Ascending aorta (tissue), 2 donors: ENCODE measurements at regions of chr12 and their contacts with region 1.

Region 1: GRCh38 chr12:49232940-49233841 is 31.7 kb upstream of the TUBA1C start:
- DNase-seq: peak in 1 of 2 donors; percentile 76
- H3K4me3 ChIP-seq: peak overlapping the region; percentile 0 to 41
- H3K27ac ChIP-seq: peak overlapping the region; percentile 79 to 80
- H3K4me1 ChIP-seq: peaks cover 3 to 26% of the 10 kb centered on the region in 2 donors
- H3K27me3 ChIP-seq: no peaks in the 10 kb centered on the region
- CTCF ChIP-seq: peak in 1 of 3 experiments; percentile 18

Region 2: GRCh38 chr12:49060237-49061156 is 172.7 kb before region 1 on chr12 and contains the start of gene KMT2D:
- intact Hi-C with region 1: loop called (anchors 2 kb)
- DNase-seq: peak; percentile 30 to 94
- H3K4me3 ChIP-seq: peak within 1 kb of the TSS; percentile 96 to 97
- H3K27ac ChIP-seq: peak within 1 kb of the TSS; percentile 94 to 98
- H3K4me1 ChIP-seq: peaks cover 8 to 25% of the 10 kb centered on the region in 2 donors
- H3K27me3 ChIP-seq: no peaks in the 10 kb centered on the region
- CTCF ChIP-seq: peak; percentile 25 to 83 (median 25)
- total RNA-seq, gene KMT2D: 106 TPM

Region 3: DNA sequence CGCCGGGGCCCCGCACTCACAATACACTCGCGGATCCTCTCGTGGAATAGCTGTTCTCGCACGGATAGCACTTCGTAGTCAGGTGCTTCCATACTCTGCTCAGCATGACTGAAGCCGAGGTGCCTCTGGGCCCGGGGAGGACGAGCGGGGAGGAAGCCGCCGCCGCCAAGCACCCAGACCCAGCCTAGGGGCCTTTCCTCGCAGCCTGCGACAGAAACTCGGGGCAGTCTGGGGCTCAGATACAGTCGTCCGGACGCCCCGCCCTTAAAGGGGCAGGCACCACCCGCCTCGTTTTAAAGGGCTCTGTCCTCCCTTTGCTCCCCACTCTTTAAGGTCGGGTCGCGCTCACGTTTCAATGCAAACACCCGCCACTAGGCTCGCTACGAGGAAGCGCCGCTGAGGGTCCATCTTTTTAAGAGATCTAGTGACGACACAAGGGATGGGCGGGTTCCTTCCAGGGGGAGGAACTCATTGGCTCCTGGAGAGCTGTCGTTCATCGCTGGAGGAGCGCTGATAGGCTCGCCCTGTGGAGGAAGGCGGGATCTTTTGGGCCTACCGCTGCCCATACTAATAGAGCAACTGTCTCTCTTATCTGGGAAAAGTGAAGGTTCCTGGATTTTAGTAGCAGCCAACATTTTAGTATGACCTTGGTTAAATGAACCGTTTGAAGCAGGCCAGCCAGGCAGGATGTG is 122.6 kb before region 1 on chr12 and contains the start of gene LMBR1L:
- intact Hi-C with region 1: loop called (anchors 1 kb)
- DNase-seq: peak; percentile 90 to 100
- H3K4me3 ChIP-seq: peak within 1 kb of the TSS; percentile 69 to 73
- H3K27ac ChIP-seq: peak within 1 kb of the TSS; percentile 93 to 95
- H3K4me1 ChIP-seq: peaks cover 19 to 32% of the 10 kb centered on the region in 2 donors
- H3K27me3 ChIP-seq: no peaks in the 10 kb centered on the region
- CTCF ChIP-seq: peak; percentile 32 to 64 (median 50)
- total RNA-seq, gene LMBR1L: 74.2 TPM

Region 4: DNA sequence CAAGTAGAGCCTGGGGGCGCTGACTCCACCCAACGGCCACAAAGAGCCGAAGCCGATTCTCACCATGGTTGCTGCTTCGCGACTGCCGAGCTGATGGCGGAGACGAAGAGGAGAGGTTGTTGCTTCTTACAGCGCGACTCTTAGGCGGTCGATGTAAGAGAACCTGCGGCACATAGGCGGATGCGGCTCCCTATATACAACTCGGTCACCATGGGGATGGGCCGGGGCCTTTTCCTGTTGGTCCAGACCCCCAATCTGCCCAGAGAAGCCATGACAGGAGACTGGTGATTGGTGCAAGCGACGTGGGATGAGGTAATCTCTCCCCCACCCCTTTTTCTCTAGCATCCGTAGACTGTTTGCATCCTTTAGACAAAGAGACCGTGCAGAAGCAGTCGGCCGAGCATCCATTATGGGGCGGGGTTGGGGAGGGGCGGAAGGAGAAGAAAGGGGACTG is 44.2 kb before region 1 on chr12 and contains the start of gene TUBA1A:
- intact Hi-C with region 1: loop called (anchors 1 kb)
- DNase-seq: peak; percentile 95 to 98
- H3K4me3 ChIP-seq: peak within 1 kb of the TSS; percentile 91 to 97
- H3K27ac ChIP-seq: peak within 1 kb of the TSS; percentile 99 to 100
- H3K4me1 ChIP-seq: peaks cover 7 to 10% of the 10 kb centered on the region in 2 donors
- H3K27me3 ChIP-seq: no peaks in the 10 kb centered on the region
- CTCF ChIP-seq: no peak
- total RNA-seq, gene TUBA1A: 214 TPM

Region 5: DNA sequence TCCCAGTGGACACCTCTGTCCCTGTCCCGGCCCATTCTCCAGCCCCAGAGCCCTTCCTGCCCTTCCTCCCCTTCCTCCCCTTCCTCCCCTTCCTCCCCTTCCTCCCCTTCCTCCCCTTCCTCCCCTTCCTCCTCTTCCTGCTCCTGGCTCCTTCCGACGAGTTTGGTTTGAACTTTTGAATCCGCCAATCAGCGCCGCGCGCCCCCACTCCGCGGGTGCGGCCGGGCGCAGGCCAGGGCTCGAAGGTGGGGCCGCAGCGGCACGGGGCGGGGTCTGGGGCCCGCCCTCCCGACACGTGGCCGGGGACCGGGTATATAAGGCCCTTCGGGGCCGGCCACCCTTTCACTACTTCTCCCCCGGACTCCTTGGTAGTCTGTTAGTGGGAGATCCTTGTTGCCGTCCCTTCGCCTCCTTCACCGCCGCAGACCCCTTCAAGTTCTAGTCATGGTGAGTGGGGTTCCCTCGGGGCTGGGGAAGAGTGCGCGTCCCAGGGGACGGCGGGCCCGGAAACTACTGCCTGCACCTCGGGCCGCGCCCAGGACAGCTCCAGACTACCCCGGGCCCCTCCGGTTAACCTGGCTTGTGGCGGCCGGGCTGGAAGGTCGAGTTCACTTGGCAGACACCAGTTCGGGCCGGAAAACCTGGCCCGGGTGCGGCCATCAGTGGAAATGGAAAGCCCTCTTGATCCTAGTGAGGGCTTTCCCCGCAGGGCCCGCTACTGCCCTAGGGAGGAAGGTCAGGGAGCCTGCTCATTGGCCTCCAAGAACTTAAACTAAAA is 31.7 kb after region 1 on chr12 and contains the start of gene TUBA1C:
- intact Hi-C with region 1: loop called (anchors 2 kb)
- DNase-seq: peak; percentile 78 to 95
- H3K4me3 ChIP-seq: peak within 1 kb of the TSS; percentile 85 to 88
- H3K27ac ChIP-seq: peak within 1 kb of the TSS; percentile 95 to 99
- H3K4me1 ChIP-seq: peaks cover 7 to 36% of the 10 kb centered on the region in 2 donors
- H3K27me3 ChIP-seq: no peaks in the 10 kb centered on the region
- CTCF ChIP-seq: peak in 1 of 3 experiments; percentile 9
- total RNA-seq, gene TUBA1C: 370 TPM

Region 6: DNA sequence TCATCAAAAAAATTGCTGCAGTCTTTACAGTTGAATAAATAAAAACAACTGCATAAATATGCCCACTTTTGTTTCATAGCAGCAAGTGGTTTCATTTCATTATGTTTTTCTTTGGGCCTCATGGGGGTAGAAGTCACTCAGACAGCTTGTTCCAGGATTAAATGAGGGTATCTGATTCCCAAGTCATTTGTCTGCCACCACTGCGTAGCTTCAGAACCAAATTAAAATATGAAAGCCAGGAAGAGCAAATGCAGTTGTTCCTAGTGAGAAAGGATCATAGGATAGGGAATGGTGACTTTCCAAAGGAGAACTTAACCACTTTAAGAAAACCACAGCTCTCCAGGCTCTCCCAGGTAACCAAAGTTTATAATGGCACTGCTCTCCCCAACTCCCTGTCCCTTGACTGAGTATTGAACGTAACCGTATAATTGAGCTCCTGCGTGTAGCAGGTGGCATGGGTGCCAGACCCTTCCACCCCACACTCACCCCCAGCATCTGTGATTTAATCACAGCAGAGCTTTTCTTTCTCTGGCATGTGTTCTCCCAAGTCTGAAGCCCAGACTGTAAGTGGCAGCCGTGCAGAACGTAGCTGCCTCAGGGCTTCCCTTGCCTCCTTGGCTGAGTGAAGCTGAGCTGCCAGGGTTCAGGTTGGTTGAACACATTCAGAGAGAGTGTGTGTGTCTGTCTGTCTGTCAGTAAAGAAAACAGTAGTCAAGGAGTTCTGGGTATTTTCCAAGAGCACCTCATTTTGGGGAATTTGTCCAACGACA is 294.4 kb after region 1 on chr12:
- intact Hi-C with region 1: no loop called
- DNase-seq: no peak
- H3K4me3 ChIP-seq: no peak overlapping the region
- H3K27ac ChIP-seq: no peak overlapping the region
- H3K4me1 ChIP-seq: no peaks in the 10 kb centered on the region
- H3K27me3 ChIP-seq: no peaks in the 10 kb centered on the region
- CTCF ChIP-seq: no peak